Naive thymus-derived CD8-positive, alpha-beta T cell (primary cell): ENCODE measurements at regions of chr12 and their contacts with region 1.

Region 1: DNA sequence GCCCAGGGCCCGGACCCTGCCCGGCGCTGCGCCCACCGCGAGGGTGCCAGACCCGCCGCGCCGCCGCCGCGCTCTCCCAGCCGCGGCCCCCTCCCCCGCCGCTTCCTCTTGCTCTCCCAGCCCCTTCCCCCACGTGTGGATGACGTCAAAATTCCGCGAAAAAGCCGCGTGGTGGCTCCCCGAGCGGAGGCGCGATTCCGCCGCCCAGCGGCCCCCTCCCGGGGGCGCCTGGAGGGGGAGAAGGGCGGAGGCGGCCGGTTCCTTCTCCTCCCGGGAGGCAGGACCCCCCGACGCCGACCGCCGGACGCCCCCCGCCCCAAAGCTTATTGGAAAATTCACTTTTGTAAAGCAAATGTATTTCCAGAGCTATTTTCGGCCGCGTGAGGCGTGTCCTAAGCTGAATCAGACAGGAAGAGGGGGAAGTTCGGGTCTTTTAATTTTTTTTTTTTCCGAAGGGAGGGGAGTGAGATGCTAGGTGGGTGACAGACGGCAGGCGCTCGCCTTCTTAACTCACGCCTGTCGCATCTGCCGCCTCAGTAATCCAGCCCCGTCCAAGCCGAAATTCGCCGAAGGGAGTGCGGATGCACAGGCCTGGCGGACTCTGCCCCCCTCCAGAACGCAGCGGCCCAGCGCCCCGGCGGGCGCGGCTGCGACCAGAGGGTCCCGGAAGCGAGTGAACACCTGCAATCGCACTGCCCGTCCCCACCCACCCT is 4.1 kb upstream of the CCND2 start:
- DNase-seq: peak; percentile 83 to 98 (median 94)
- ATAC-seq: peak; percentile 46 to 49
- H3K4me3 Mint-ChIP-seq: peak overlapping the region; percentile 95 to 99 (median 96)
- H3K27ac Mint-ChIP-seq: peak overlapping the region; percentile 93 to 100 (median 99)
- H3K4me1 Mint-ChIP-seq: peaks cover 11 to 27% (median 18%) of the 10 kb centered on the region in 4 donors
- H3K27me3 Mint-ChIP-seq: peaks cover 0 to 5% (median 0%) of the 10 kb centered on the region in 5 donors

Region 2: DNA sequence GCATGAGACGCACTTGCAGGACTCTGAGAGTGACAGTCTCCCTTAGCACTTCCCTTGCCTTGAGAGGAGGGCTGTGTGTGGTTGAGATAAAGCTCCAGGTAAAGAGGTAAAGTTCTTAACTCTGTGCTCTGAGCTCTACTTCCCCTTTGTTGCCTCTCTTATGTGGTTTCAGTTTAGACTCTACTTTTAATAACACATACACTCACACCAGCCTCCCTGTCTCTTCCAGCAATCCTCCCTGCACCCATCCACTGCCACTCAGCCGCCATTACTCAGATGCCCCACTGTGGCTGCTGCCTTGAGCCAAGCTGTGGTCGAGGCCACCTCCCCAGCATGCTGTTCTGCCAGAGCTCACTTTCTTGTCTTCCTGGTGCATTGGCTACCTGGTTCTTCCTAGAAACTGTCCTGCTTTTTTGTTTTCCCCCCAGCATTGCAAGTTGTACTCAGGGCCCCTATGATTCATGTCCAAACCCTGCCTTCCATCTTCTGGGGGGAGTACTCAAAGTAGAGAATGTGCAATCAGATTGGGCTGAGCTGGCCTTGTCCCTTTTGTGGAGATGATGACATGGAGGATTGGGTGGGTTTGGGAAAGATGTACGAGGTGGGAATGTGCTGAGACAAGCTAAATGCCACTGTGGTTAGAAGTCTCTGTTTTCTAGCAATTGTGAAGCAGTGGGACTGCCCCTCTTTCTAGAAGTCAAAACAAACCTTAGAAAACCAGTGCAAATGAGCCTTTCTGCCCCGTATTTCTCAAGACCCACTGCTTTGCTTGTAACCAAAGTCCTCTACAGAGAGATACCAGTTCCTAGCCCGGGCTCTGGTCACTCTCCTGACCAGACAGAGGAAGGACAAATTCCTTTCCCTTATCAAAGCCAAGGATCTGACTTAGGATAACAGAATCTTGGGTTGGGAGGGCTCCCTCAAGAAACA is 280.7 kb before region 1 on chr12:
- POLR2A ChIA-PET with region 1: interaction called, 42 read pairs
- DNase-seq: peak in 7 of 10 donors; percentile 21 to 73 (median 44)
- ATAC-seq: peak; percentile 92 to 93
- H3K4me3 Mint-ChIP-seq: peak overlapping the region; percentile 42 to 80 (median 66)
- H3K27ac Mint-ChIP-seq: peak overlapping the region; percentile 80 to 96 (median 91)
- H3K4me1 Mint-ChIP-seq: peaks cover 14 to 39% (median 33%) of the 10 kb centered on the region in 4 donors
- H3K27me3 Mint-ChIP-seq: no peaks in the 10 kb centered on the region

Region 3: GRCh38 chr12:4030929-4031702 is 238.3 kb before region 1 on chr12:
- POLR2A ChIA-PET with region 1: interaction called, 11 read pairs
- DNase-seq: peak; percentile 52 to 84 (median 74)
- ATAC-seq: peak; percentile 95
- H3K4me3 Mint-ChIP-seq: peak overlapping the region; percentile 68 to 88 (median 81)
- H3K27ac Mint-ChIP-seq: peak overlapping the region; percentile 28 to 94 (median 90)
- H3K4me1 Mint-ChIP-seq: peaks cover 19 to 44% (median 42%) of the 10 kb centered on the region in 4 donors
- H3K27me3 Mint-ChIP-seq: no peaks in the 10 kb centered on the region

Region 4: DNA sequence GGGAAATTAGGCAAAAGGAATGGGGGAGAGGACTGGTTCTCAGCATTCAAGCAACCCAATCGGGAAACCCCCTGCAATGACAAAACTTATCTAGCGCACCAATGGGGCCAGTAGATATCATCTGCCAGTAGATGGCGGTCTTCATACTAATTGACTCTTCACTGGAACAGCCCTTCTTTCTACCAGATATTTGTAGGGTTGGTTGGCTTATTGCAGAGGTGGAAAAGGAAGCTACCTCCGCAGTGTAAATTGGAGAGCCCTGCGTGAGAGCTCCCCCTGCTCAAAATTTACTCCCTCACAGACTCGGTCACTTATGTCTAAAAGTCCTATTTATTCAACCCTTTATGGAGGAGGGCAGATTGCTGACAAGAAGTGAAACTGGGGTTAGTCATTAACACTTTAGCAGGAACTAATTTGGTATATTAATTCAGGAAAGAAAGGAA is 162.0 kb before region 1 on chr12:
- POLR2A ChIA-PET with region 1: interaction called, 10 read pairs
- DNase-seq: peak; percentile 10 to 83 (median 70)
- ATAC-seq: peak; percentile 99
- H3K4me3 Mint-ChIP-seq: peak overlapping the region in 8 of 10 donors; percentile 27 to 59 (median 46)
- H3K27ac Mint-ChIP-seq: peak overlapping the region; percentile 8 to 94 (median 79)
- H3K4me1 Mint-ChIP-seq: peaks cover 9 to 18% (median 17%) of the 10 kb centered on the region in 4 donors
- H3K27me3 Mint-ChIP-seq: peaks cover 0 to 5% (median 0%) of the 10 kb centered on the region in 5 donors

Region 5: DNA sequence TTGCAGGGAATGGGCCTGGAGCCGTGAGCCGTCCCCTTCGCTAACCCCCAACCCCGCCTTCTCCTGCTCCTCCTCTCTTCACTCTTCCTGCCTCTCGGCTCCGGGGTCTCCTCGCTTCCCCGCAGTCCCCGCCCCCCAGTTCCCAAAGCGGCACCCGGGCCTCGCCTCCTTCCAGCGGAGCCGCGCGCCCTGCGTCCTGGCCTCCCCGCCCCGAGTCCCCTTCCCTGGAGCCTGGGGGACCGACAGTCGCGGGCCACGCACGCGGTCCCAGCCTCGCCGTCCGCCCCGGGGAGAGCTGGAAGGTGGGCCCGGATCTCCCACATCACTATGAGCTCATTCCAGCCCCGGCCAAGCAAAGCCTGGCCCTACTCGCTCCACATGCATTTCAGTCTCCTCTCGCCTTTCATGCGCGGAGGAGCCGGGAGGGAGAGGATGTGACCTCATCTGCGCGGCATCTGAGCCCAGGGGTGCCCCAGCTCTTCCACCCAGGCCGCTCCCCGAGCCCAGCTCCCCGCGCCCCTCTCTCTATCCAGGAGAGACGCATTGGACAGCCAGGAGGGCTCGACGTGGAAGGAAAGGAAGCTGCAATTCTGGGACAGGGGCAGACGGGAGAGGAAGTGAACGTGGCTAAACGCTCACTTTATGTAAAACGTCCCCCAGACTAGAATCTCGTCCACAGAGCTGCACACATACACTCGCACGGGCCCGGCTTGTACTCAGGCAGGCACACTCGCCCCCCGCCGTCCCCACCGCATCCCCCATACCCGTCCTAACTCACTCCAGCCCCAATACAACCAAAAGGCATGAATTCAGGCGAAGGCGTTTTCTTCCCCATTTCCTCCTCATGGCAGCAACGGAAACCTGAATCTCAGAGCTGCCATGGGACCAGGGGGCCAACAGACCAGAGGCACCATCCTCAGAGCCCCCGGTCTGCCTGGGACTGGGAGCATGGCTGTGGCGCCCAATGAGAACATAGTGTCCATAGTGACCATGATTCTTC is 104.6 kb before region 1 on chr12:
- POLR2A ChIA-PET with region 1: interaction called, 14 read pairs
- DNase-seq: peak; percentile 29 to 78 (median 48)
- ATAC-seq: peak; percentile 96 to 97
- H3K4me3 Mint-ChIP-seq: peak overlapping the region; percentile 81 to 95 (median 92)
- H3K27ac Mint-ChIP-seq: peak overlapping the region; percentile 85 to 96 (median 91)
- H3K4me1 Mint-ChIP-seq: peaks cover 10 to 30% (median 15%) of the 10 kb centered on the region in 4 donors
- H3K27me3 Mint-ChIP-seq: peaks cover 0 to 2% (median 0%) of the 10 kb centered on the region in 5 donors

Region 6: GRCh38 chr12:4203772-4204376 is 65.6 kb before region 1 on chr12:
- POLR2A ChIA-PET with region 1: no interaction called
- DNase-seq: no peak
- ATAC-seq: no peak
- H3K4me3 Mint-ChIP-seq: no peak overlapping the region
- H3K27ac Mint-ChIP-seq: no peak overlapping the region
- H3K4me1 Mint-ChIP-seq: peaks cover 0 to 37% (median under 1%) of the 10 kb centered on the region in 4 donors
- H3K27me3 Mint-ChIP-seq: peaks cover 0 to 10% (median 3%) of the 10 kb centered on the region in 5 donors

Region 7: GRCh38 chr12:4293299-4293965 is 24.0 kb after region 1 on chr12:
- POLR2A ChIA-PET with region 1: interaction called, 14 read pairs
- DNase-seq: no peak
- ATAC-seq: peak; percentile 48 to 57
- H3K4me3 Mint-ChIP-seq: peak overlapping the region; percentile 58 to 85 (median 78)
- H3K27ac Mint-ChIP-seq: peak overlapping the region; percentile 88 to 99 (median 93)
- H3K4me1 Mint-ChIP-seq: peaks cover 43 to 86% (median 67%) of the 10 kb centered on the region in 4 donors
- H3K27me3 Mint-ChIP-seq: no peaks in the 10 kb centered on the region

Region 8: GRCh38 chr12:4303750-4304149 is 34.3 kb after region 1 on chr12:
- POLR2A ChIA-PET with region 1: no interaction called
- DNase-seq: no peak
- ATAC-seq: no peak
- H3K4me3 Mint-ChIP-seq: no peak overlapping the region
- H3K27ac Mint-ChIP-seq: peak overlapping the region in 7 of 10 donors; percentile 37 to 75 (median 57)
- H3K4me1 Mint-ChIP-seq: peaks cover 3 to 13% (median 11%) of the 10 kb centered on the region in 4 donors
- H3K27me3 Mint-ChIP-seq: no peaks in the 10 kb centered on the region